Activated CD4-positive, alpha-beta T cell treated with anti-CD3 and anti-CD28 coated beads for 36 hours (primary cell): ENCODE measurements at regions of chr3 and their contacts with region 1.

Region 1: DNA sequence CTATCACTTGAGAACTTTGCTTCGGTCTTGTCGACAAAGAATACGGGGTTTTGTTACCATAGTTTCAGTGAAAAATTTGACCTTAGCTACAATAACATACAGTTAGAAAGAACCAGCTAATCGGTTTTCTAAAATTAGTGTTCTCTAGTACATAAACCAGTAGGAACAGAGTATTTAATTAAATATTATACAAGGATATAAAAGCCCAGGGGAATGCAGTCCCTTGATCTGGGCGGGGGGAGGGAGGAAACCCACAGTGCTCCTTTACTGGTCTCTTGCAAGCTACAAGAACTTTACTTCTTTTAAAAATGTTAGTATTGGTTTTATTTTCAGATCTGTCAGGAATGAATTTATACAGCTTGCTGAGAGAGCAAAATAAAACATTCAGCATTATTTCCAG is 41.8 kb downstream of the ITPR1 start:
- DNase-seq: no peak
- ATAC-seq: no peak
- H3K4me3 Mint-ChIP-seq: no peak overlapping the region
- H3K27ac Mint-ChIP-seq: no peak overlapping the region
- H3K4me1 Mint-ChIP-seq: peaks cover 14% of the 10 kb centered on the region
- H3K27me3 Mint-ChIP-seq: no peaks in the 10 kb centered on the region

Region 2: DNA sequence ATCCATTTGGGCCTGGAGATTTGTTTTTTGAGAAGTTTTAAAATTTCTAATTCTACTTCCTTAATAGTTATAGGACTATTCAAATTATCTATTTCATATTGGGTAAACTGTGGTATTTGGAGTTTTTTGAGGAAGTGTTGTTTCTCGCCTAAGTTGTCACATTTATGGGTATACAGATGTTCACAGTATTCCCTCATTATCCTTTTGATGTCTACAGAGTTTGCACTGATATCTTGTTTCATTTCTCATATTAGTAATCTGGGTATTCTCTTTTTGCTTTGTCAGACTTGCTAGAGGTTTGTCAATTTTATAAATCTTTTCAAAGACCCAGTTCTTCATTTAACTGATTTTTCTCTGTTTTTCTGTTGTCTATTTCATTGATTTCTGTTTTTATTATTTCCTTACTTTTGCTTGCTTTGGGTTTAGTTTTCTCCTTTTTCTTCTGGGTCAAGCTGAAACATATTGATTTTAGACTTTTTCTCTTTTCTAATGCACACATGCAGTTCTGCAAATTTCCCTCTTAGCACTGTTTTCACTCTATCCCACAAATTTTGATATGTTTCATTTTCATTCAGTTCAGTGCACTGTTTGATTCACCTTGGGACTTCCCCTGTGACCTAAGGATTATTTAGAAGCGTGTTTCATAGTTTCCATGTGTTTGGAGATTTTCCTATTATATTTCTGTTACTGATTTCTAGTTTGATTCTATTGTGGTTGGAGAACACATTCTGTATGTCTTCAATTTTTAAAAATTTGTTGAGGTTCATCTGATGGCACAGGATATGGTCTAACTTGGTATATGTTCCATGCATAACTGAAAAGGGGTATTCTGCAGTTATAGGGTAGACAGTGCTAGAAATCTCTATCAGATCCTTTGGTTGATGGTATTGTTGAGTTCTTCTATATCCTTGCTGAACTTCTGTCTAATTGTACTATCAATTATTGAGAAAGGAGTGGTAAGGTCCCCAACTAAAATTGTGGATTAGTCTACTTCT is 147.4 kb before region 1 on chr3:
- CTCF ChIA-PET with region 1: no interaction called
- POLR2A ChIA-PET with region 1: no interaction called
- intact Hi-C with region 1: no loop called
- DNase-seq: no peak
- ATAC-seq: peak; percentile 91
- H3K4me3 Mint-ChIP-seq: peak overlapping the region; percentile 1
- H3K27ac Mint-ChIP-seq: peak overlapping the region; percentile 51
- H3K4me1 Mint-ChIP-seq: peaks cover 37% of the 10 kb centered on the region
- H3K27me3 Mint-ChIP-seq: no peaks in the 10 kb centered on the region

Region 3: GRCh38 chr3:4512895-4513616 is 21.9 kb before region 1 on chr3:
- CTCF ChIA-PET with region 1: no interaction called
- POLR2A ChIA-PET with region 1: no interaction called
- intact Hi-C with region 1: no loop called
- DNase-seq: no peak
- ATAC-seq: no peak
- H3K4me3 Mint-ChIP-seq: no peak overlapping the region
- H3K27ac Mint-ChIP-seq: no peak overlapping the region
- H3K4me1 Mint-ChIP-seq: peaks cover 22% of the 10 kb centered on the region
- H3K27me3 Mint-ChIP-seq: no peaks in the 10 kb centered on the region

Region 4: DNA sequence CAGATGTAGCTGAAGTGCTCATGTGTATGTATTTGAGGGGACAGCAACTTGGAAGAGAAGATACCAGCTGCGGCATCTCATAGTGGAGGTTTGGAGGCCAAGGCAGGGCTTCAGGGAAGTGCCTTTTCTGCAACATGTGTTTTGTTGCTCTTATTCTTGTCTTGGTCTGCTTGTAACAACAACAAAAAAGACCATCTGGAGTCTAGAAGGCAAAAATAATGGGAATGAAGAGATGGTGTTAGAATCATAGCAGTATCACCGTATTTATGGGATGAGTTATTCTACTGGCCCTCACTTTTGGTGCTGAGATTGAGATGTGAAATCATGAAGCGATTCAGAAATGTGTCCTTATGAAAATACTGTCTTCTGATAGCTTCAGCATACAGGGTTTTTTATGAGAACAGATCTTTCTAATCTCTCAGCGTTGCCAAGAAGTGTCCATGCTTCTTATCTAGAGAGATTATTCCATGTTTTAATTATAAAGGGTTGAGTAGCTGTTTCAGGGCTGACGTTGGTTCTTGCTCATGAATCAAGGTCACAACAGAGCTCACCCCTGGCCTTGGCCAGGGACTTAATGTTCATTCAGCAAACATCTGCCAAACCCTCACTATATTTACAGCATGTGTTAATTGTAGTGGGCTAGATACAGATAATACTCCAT is 16.3 kb after region 1 on chr3:
- CTCF ChIA-PET with region 1: interaction called, 4 read pairs
- POLR2A ChIA-PET with region 1: no interaction called
- intact Hi-C with region 1: loop called in 1 of 2 experiments (anchors 1 kb)
- DNase-seq: no peak
- ATAC-seq: no peak
- H3K4me3 Mint-ChIP-seq: no peak overlapping the region
- H3K27ac Mint-ChIP-seq: no peak overlapping the region
- H3K4me1 Mint-ChIP-seq: peaks cover 2% of the 10 kb centered on the region
- H3K27me3 Mint-ChIP-seq: no peaks in the 10 kb centered on the region

Region 5: DNA sequence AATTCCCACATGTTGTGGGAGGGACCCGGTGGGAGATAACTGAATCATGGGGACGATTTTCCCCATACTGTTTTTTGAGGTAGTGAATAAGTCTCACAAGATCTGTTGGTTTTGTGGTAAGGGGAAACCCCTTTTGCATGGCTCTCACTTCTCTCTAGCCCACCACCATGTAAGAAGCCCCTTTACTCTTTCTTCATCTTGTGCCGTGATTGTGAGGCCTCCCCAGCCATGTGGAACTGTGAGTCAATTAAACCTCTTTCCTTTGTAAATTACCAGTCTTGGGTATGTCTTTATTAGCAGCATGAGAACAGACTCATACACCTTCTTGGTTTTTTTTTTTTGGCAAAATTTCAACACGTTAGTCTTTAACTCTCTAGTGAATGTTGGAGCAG is 605.3 kb after region 1 on chr3:
- CTCF ChIA-PET with region 1: no interaction called
- POLR2A ChIA-PET with region 1: no interaction called
- intact Hi-C with region 1: no loop called
- DNase-seq: no peak
- ATAC-seq: no peak
- H3K4me3 Mint-ChIP-seq: no peak overlapping the region
- H3K27ac Mint-ChIP-seq: peak overlapping the region; percentile 8
- H3K4me1 Mint-ChIP-seq: peaks cover 53% of the 10 kb centered on the region
- H3K27me3 Mint-ChIP-seq: no peaks in the 10 kb centered on the region